Left ventricle myocardium superior (tissue), 1 donor: ENCODE measurements at regions of chr18 and their contacts with region 1.

Region 1: GRCh38 chr18:62425465-62426195 is 97.2 kb upstream of the ZCCHC2 start:
- DNase-seq: peak; percentile 61
- ATAC-seq: peak; percentile 94

Region 2: DNA sequence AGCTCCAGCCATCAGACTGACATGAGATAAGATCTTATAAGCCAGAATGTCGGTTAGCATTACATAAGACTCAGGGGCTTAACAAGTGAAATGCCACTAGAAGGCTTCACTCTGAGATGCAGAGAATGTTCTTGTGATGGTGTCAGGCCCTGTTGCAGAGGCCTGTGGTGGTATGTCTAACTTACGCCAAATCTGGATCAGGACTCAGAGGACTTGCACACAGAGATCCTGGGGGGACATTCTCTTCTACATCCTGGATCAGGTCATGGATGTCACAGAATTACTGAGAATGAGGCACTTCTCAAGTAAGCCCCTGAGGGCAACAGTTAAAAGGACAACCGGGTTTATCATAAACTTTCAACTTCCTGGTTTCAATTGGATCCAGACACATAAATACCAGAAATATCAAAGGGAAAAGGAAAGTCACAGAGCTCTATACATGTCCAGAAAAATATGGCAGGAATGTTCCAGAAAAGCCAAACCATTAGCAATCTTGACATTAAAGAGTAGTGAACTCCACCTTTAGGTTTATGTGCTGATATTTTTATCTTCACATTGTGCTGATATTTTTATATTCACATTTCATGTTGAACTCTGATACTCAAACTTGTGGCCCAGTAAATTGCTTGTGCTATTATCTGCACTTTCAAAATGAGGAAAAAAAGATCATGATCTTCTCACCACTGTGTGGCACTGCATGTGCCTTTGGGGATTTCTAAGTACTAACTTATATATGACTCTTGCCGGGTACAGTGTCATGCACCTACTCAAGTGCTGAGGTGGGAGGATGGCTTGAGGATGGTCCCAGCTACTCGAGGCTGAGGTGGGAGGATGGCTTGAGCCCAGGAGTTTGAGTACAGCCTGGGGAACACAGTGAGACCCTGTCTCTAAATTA is 395.3 kb before region 1 on chr18:
- intact Hi-C with region 1: no loop called
- DNase-seq: no peak
- ATAC-seq: no peak

Region 3: DNA sequence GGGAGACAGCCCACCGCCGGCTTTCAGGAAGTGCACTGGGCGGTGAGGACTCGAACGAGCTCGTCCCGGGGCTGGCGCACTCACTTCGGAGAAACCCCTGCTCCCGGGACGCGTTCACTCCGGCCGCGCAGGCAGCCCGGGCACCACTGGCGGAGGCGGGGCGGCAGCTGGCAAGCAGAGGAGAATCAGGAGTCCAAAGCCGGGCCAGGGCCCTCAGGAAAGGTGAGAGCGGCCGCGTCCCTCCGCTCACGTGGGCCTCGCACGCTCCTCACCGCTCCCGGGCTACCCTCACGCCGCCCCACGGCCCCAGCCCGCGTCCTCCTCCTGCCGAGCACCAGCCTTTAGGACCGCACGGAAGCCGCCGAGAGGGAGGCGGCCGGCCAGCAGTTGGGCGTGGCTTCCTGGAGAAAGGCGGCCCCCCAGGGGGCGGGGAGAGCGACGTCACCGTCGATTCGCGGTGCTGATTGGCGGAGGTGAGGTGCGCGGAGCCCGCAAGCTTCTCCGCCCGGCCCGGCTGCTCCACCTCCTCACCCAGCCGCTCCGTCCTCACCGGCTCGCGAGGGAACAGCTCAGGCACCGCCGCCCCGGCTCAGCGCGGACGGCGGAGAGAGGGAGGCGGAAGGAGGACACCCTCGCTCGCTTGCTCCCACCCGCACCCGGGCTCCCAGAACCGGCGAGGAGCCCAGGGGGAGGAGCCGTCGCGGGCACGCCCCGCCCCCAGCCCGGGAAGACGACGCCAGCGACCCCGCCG is 97.0 kb after region 1 on chr18 and contains the start of gene ZCCHC2:
- intact Hi-C with region 1: loop called (anchors 5 kb)
- DNase-seq: peak; percentile 99
- ATAC-seq: peak; percentile 86
- total RNA-seq, gene ZCCHC2: 18.0 TPM

Region 4: GRCh38 chr18:62584241-62585120 is 158.9 kb after region 1 on chr18:
- intact Hi-C with region 1: loop called (anchors 5 kb)
- DNase-seq: peak; percentile 86
- ATAC-seq: peak; percentile 89